ENCODE measurements at regions of chr11 and their contacts with region 1.

Region 1: DNA sequence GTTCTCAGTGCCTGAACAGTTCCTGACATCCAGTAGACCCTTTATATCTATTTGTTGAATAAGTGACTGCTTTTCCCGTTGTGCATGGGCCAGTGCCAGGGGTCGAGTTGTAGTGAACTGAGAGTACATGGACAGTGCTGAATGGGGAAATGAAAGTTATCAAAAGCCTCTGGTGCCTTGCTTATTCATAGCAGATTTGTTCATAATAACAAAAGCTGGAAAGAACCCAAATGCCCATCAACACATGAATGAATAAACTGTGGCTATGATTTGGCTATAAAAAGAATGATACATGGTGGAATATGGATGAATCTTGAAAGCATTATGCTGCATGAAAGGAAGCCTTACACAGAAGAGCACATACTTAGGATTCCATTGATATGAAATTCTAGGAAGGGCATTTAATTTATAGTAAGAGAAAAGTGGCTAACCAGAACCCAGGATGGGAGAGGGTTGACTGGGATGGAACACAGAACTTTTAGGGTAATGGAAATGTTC is 42.6 kb downstream of the PACS1 start:
- DNase-seq: no peak
- ATAC-seq: peak; percentile 22
- H3K4me3 ChIP-seq: no peak overlapping the region
- H3K4me3 Mint-ChIP-seq: peak overlapping the region; percentile 42 to 81 (median 70)
- H3K27ac ChIP-seq: peak overlapping the region; percentile 55
- H3K27ac Mint-ChIP-seq: peak overlapping the region; percentile 80 to 95 (median 90)
- H3K4me1 ChIP-seq: peaks cover 76 to 89% of the 10 kb centered on the region in 2 donors
- H3K4me1 Mint-ChIP-seq: peaks cover 74 to 100% (median 90%) of the 10 kb centered on the region in 7 donors
- H3K27me3 ChIP-seq: no peaks in the 10 kb centered on the region
- H3K27me3 Mint-ChIP-seq: no peaks in the 10 kb centered on the region

Region 2: DNA sequence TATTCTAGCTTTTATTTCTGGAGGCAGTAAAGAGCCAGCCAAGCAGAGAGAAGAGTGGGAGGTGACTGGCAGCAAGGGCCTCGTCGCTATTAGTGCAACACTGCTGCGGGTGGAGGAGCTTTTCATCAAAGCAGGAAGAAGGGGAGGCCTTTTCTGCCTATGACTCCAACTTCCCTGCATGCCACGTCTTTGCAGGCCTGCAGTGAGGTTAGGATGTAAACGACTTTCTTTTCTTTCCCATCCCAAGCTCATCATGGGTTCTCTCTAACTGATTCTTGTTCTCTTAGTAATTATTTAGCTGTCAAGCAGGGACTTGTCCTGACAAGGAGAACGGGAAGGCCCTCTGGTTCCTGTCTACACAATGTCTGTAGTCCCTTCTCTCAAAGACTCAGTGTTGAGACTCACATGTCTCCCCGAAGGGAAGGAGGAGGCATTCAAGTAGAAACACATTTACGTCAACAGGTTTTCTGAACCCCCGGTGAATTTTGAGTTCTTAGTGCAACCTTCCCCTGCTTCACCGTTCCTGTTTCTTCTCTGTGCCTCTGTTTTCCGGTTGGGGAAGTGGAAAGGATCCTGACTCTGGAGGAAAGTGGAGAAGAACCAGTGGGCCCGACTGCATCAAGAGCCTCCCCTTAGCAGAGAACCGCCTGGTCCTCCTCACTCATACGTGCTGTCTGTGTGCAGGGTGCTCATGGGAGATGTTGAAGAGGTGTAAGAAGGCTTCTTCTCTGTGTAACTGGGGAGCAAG is 14.3 kb after region 1 on chr11:
- CTCF ChIA-PET with region 1: interaction called, 7 read pairs
- POLR2A ChIA-PET with region 1: interaction called, 17 read pairs
- intact Hi-C with region 1: loop called in 1 of 2 experiments (anchors 1 kb)
- DNase-seq: peak in 8 of 9 donors; percentile 45 to 74 (median 65)
- ATAC-seq: peak; percentile 95
- H3K4me3 ChIP-seq: peak overlapping the region; percentile 36
- H3K4me3 Mint-ChIP-seq: peak overlapping the region; percentile 60 to 88 (median 83)
- H3K27ac ChIP-seq: peak overlapping the region; percentile 74
- H3K27ac Mint-ChIP-seq: peak overlapping the region; percentile 82 to 100 (median 97)
- H3K4me1 ChIP-seq: peaks cover 20 to 65% of the 10 kb centered on the region in 2 donors
- H3K4me1 Mint-ChIP-seq: peaks cover 53 to 89% (median 84%) of the 10 kb centered on the region in 7 donors
- H3K27me3 ChIP-seq: no peaks in the 10 kb centered on the region
- H3K27me3 Mint-ChIP-seq: no peaks in the 10 kb centered on the region

Region 3: GRCh38 chr11:66157179-66157864 is 44.7 kb after region 1 on chr11:
- CTCF ChIA-PET with region 1: no interaction called
- POLR2A ChIA-PET with region 1: no interaction called
- intact Hi-C with region 1: no loop called
- DNase-seq: no peak
- ATAC-seq: no peak
- H3K4me3 ChIP-seq: no peak overlapping the region
- H3K4me3 Mint-ChIP-seq: no peak overlapping the region
- H3K27ac ChIP-seq: no peak overlapping the region
- H3K27ac Mint-ChIP-seq: peak overlapping the region in 5 of 9 donors; percentile 6 to 72 (median 29)
- H3K4me1 ChIP-seq: peaks cover 0 to 8% of the 10 kb centered on the region in 2 donors
- H3K4me1 Mint-ChIP-seq: peaks cover 21 to 77% (median 65%) of the 10 kb centered on the region in 7 donors
- H3K27me3 ChIP-seq: no peaks in the 10 kb centered on the region
- H3K27me3 Mint-ChIP-seq: no peaks in the 10 kb centered on the region

Region 4: DNA sequence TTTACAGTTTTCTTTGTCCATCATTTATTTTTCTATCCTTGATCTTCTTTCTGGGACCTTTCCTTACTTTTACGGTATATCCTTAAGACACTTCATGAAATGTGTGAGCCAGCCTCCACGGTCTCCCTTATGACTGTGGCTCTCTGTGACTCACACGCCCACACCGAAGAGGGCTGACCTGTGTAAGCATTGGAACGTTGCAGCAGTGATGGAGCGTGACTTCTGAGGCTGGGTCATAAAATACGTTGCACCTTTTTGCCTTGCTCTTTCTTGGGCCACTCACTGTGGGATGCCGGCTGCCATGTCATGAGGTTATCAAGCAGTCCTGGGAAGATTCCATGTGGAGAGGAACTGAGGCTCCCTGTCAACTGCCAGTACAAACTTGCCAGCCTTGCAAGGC is 59.5 kb after region 1 on chr11:
- CTCF ChIA-PET with region 1: no interaction called
- POLR2A ChIA-PET with region 1: no interaction called
- intact Hi-C with region 1: no loop called
- DNase-seq: no peak
- ATAC-seq: no peak
- H3K4me3 ChIP-seq: no peak overlapping the region
- H3K4me3 Mint-ChIP-seq: peak overlapping the region in 1 of 10 donors; percentile 30
- H3K27ac ChIP-seq: no peak overlapping the region
- H3K27ac Mint-ChIP-seq: peak overlapping the region in 2 of 9 donors; percentile 5 to 38
- H3K4me1 ChIP-seq: no peaks in the 10 kb centered on the region
- H3K4me1 Mint-ChIP-seq: peaks cover 8 to 61% (median 47%) of the 10 kb centered on the region in 7 donors
- H3K27me3 ChIP-seq: no peaks in the 10 kb centered on the region
- H3K27me3 Mint-ChIP-seq: no peaks in the 10 kb centered on the region